IMR-90 (cell line): ENCODE measurements at regions of chrX and their contacts with region 1.

Region 1: GRCh38 chrX:18410043-18410442 is 15.4 kb upstream of the CDKL5 start:
- DNase-seq: peak; percentile 55
- ATAC-seq: peak; percentile 59
- H3K4me3 ChIP-seq: no peak overlapping the region
- H3K27ac ChIP-seq: no peak overlapping the region
- H3K4me1 ChIP-seq: peaks cover 2% of the 10 kb centered on the region; the same call in 1 of the 2 replicates
- H3K27me3 ChIP-seq: no peaks in the 10 kb centered on the region
- CTCF ChIP-seq: peak; percentile 54
- POLR2A ChIP-seq: no peak
- RAD21 ChIP-seq: peak; percentile 63

Region 2: GRCh38 chrX:18886344-18887161 is 476.5 kb after region 1 on chrX:
- CTCF ChIA-PET with region 1: interaction called, 3 read pairs
- POLR2A ChIA-PET with region 1: no interaction called
- dilution Hi-C with region 1: no loop called
- in situ Hi-C with region 1: no loop called
- intact Hi-C with region 1: loop called (anchors 1 kb)
- DNase-seq: peak; percentile 23
- ATAC-seq: peak; percentile 72
- H3K4me3 ChIP-seq: peak overlapping the region; percentile 39
- H3K27ac ChIP-seq: peak overlapping the region; percentile 67; the same call in 1 of the 2 replicates
- H3K4me1 ChIP-seq: peaks cover 11% of the 10 kb centered on the region; the same call in 1 of the 2 replicates
- H3K27me3 ChIP-seq: no peaks in the 10 kb centered on the region; the same call in 1 of the 2 replicates
- CTCF ChIP-seq: peak; percentile 37
- POLR2A ChIP-seq: no peak
- RAD21 ChIP-seq: peak; percentile 32

Region 3: GRCh38 chrX:18984381-18985185 is 574.5 kb after region 1 on chrX:
- CTCF ChIA-PET with region 1: no interaction called
- POLR2A ChIA-PET with region 1: no interaction called
- dilution Hi-C with region 1: no loop called
- in situ Hi-C with region 1: no loop called
- intact Hi-C with region 1: loop called (anchors 10 kb)
- DNase-seq: peak; percentile 52
- ATAC-seq: peak; percentile 91
- H3K4me3 ChIP-seq: peak overlapping the region; percentile 91
- H3K27ac ChIP-seq: peak overlapping the region; percentile 85
- H3K4me1 ChIP-seq: 0 out of 2 replicates have a peak, but pooled peaks cover 2% of the 10 kb centered on the region
- H3K27me3 ChIP-seq: no peaks in the 10 kb centered on the region
- CTCF ChIP-seq: 0 out of 2 replicates have a peak, but pooled peaks have one; percentile 22
- POLR2A ChIP-seq: peak; percentile 44; the same call in 1 of the 2 replicates
- RAD21 ChIP-seq: no peak